Endothelial cell of umbilical vein (primary cell): ENCODE measurements at regions of chr1 and their contacts with region 1.

Region 1: GRCh38 chr1:46442317-46443161 is 47.1 kb upstream of the DMBX1 start:
- DNase-seq: peak; percentile 61
- H3K4me3 ChIP-seq: peak overlapping the region in 2 of 3 experiments; percentile 8 to 9
- H3K27ac ChIP-seq: no peak overlapping the region
- H3K4me1 ChIP-seq: no peaks in the 10 kb centered on the region
- H3K27me3 ChIP-seq: peaks cover 12% of the 10 kb centered on the region in 2 experiments
- CTCF ChIP-seq: peak; percentile 80 to 93
- POLR2A ChIP-seq: no peak

Region 2: GRCh38 chr1:46401964-46402626 is 40.4 kb before region 1 on chr1:
- CTCF ChIA-PET with region 1: interaction called, 6 read pairs
- POLR2A ChIA-PET with region 1: no interaction called
- dilution Hi-C with region 1: no loop called
- intact Hi-C with region 1: loop called (anchors 2 kb)
- DNase-seq: peak; percentile 33
- H3K4me3 ChIP-seq: no peak overlapping the region
- H3K27ac ChIP-seq: no peak overlapping the region
- H3K4me1 ChIP-seq: no peaks in the 10 kb centered on the region
- H3K27me3 ChIP-seq: peaks cover 0 to 2% of the 10 kb centered on the region in 2 experiments
- CTCF ChIP-seq: no peak
- POLR2A ChIP-seq: no peak

Region 3: DNA sequence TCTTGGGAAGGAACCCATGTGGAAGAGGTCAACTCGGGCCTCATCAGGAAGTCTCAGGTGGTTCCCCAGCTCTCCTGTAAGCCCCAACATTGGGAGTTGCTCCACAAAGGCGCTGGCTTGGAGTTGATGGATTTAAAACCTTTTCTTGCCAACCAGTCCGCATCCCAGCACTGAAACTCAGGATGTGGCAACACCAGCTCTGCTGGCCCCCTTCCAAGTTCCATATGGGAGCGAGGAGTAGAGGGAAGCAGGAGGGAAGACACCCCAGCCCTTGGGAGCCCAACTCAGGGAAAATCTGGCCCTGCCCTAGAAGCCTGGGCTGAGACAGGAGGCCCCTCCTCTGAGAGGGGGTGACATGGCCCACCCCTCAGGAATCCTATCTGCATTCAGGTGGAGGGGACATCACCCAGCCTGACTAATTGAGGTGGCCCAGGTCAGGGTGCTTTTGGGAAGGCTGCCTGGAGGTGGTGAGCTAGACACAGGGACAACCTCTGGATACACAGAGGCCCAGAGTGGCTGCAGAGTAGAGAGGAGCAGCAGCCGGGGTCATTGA is 13.9 kb after region 1 on chr1:
- CTCF ChIA-PET with region 1: interaction called, 29 read pairs
- POLR2A ChIA-PET with region 1: no interaction called
- dilution Hi-C with region 1: no loop called
- intact Hi-C with region 1: no loop called
- DNase-seq: no peak
- H3K4me3 ChIP-seq: no peak overlapping the region
- H3K27ac ChIP-seq: no peak overlapping the region
- H3K4me1 ChIP-seq: no peaks in the 10 kb centered on the region
- H3K27me3 ChIP-seq: peaks cover 31 to 38% of the 10 kb centered on the region in 2 experiments
- CTCF ChIP-seq: no peak
- POLR2A ChIP-seq: no peak

Region 4: GRCh38 chr1:46489638-46490405 is 47.3 kb after region 1 on chr1 and contains the start of gene DMBX1:
- CTCF ChIA-PET with region 1: interaction called, 4 read pairs
- POLR2A ChIA-PET with region 1: no interaction called
- dilution Hi-C with region 1: loop called (anchors 10 kb)
- intact Hi-C with region 1: no loop called
- DNase-seq: no peak
- H3K4me3 ChIP-seq: no peak within 1 kb of the TSS
- H3K27ac ChIP-seq: no peak within 1 kb of the TSS
- H3K4me1 ChIP-seq: no peaks in the 10 kb centered on the region
- H3K27me3 ChIP-seq: peaks cover 88 to 93% of the 10 kb centered on the region in 2 experiments
- CTCF ChIP-seq: no peak
- POLR2A ChIP-seq: no peak
- total RNA-seq, gene DMBX1: not detected in 2 replicates

Region 5: GRCh38 chr1:46527474-46528296 is 85.1 kb after region 1 on chr1:
- CTCF ChIA-PET with region 1: interaction called, 165 read pairs
- POLR2A ChIA-PET with region 1: no interaction called
- dilution Hi-C with region 1: no loop called
- intact Hi-C with region 1: loop called (anchors 1 kb)
- DNase-seq: peak; percentile 67
- H3K4me3 ChIP-seq: no peak overlapping the region
- H3K27ac ChIP-seq: no peak overlapping the region
- H3K4me1 ChIP-seq: no peaks in the 10 kb centered on the region
- H3K27me3 ChIP-seq: peaks cover 52 to 57% of the 10 kb centered on the region in 2 experiments
- CTCF ChIP-seq: peak; percentile 90 to 95
- POLR2A ChIP-seq: no peak

Region 6: DNA sequence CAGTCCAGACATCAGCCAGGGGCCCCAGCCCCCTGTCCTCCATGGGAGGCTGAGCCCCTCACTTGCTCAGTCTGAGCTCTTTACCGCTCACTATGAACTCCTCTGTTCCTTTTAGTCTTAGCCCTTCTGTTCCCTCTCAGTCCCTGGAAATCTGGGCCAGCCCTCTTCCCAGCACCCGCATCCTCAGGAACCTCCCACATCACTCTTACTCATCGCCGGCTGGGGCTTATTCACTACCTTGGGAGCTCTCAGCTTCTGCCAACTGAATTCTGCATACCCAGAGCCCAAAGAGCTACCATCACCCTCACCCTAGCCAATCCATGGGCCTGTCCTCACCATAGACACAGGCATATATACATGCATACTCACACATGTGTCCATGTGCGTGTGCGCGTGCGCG is 97.4 kb after region 1 on chr1:
- CTCF ChIA-PET with region 1: interaction called, 29 read pairs
- POLR2A ChIA-PET with region 1: no interaction called
- dilution Hi-C with region 1: no loop called
- intact Hi-C with region 1: no loop called
- DNase-seq: no peak
- H3K4me3 ChIP-seq: no peak overlapping the region
- H3K27ac ChIP-seq: no peak overlapping the region
- H3K4me1 ChIP-seq: no peaks in the 10 kb centered on the region
- H3K27me3 ChIP-seq: peaks cover 49 to 54% of the 10 kb centered on the region in 2 experiments
- CTCF ChIP-seq: no peak
- POLR2A ChIP-seq: no peak

Region 7: DNA sequence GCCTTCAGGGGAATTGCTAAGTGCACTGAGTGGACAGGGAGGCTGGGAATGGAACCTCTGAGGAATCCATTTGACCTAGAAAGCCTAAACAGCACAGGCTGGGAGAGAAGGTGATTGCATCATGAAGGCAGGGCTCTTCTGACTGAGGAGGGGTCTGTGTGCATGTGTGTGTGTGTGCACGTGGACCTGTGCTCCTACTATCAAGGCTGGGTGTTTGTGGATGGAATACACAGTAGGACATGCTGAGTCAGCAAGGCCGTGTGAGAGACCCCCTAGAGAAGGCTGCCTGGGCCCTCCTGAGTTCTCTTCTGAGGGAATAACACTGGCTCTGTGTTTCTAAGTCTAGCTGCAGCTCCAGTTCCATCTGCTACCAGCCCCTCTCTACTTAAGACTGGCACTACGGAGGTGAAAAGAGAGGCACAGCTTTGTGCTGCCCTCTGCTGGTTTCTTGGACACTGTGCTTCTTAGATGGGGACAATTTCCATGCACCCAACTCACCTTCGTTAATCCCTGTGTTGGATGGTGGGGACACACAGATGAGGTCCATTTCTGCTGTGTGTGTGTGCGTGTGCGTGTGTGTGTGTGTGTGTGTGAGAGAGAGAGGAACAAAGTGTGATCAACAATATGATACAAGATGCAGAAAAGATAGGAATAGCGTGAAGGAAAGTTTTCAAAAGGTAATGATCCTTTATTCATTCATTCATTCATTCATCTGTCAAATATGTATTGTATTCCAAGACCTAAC is 282.6 kb after region 1 on chr1:
- CTCF ChIA-PET with region 1: interaction called, 18 read pairs
- POLR2A ChIA-PET with region 1: no interaction called
- dilution Hi-C with region 1: no loop called
- intact Hi-C with region 1: loop called (anchors 1 kb)
- DNase-seq: peak; percentile 82
- H3K4me3 ChIP-seq: no peak overlapping the region
- H3K27ac ChIP-seq: no peak overlapping the region
- H3K4me1 ChIP-seq: peaks cover 21% of the 10 kb centered on the region
- H3K27me3 ChIP-seq: peaks cover 15 to 16% of the 10 kb centered on the region in 2 experiments
- CTCF ChIP-seq: peak; percentile 81 to 83
- POLR2A ChIP-seq: no peak